ENCODE measurements at regions of chr5 and their contacts with region 1.

Region 1: DNA sequence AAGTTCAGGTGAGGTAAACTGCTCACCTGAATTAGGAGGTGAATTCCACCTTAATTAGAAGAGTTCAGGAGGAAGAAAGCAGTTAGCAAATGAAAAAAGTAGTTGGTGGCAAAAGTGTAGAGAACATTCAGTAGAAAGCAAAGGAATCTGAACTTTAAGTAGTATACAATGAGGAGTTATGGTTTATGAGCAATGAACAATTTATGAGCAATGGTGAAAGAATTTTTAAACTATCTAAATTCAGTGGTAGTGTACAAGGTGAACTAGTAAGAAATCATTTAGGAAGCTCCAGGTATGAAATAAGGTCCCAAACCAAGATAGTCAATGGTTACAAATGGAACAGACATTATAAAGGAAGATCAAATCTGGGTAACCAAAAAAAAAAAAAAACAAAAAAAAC is 3.1 kb downstream of the CETN3 start:
- DNase-seq: no peak
- H3K4me3 ChIP-seq: no peak overlapping the region
- H3K27me3 ChIP-seq: no peaks in the 10 kb centered on the region
- CTCF ChIP-seq: no peak

Region 2: GRCh38 chr5:90488791-90489190 is 82.3 kb after region 1 on chr5:
- CTCF ChIA-PET with region 1: no interaction called
- POLR2A ChIA-PET with region 1: no interaction called
- DNase-seq: peak; percentile 61
- H3K4me3 ChIP-seq: no peak overlapping the region
- H3K27me3 ChIP-seq: no peaks in the 10 kb centered on the region
- CTCF ChIP-seq: no peak

Region 3: DNA sequence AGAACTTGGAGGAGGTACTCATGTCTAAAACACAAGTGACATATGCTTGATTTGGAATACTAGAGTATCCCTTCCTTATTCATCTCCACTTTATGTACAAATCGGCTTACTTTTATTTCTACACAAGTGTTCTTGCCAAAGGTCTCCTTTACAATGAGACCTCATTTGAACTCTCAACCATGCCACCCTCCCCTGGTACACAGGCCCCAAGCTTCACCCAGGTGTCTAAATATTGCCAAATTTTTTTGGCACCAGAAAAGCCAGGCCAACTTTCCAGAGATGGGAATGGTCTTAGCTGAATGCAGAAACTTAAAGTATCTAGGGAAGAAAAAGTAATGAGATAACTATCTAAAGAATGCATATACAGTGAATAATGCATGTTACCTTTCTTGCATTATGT is 104.0 kb after region 1 on chr5:
- CTCF ChIA-PET with region 1: no interaction called
- POLR2A ChIA-PET with region 1: interaction called, 22 read pairs
- DNase-seq: no peak
- H3K4me3 ChIP-seq: no peak overlapping the region
- H3K27me3 ChIP-seq: no peaks in the 10 kb centered on the region
- CTCF ChIP-seq: no peak

Region 4: GRCh38 chr5:90983148-90983547 is 576.7 kb after region 1 on chr5:
- CTCF ChIA-PET with region 1: no interaction called
- POLR2A ChIA-PET with region 1: no interaction called
- DNase-seq: no peak
- H3K4me3 ChIP-seq: no peak overlapping the region
- H3K27me3 ChIP-seq: no peaks in the 10 kb centered on the region
- CTCF ChIP-seq: no peak

Measured in BJ (cell line).